MCF 10A (cell line): ENCODE measurements at regions of chr4 and their contacts with region 1.

Region 1: DNA sequence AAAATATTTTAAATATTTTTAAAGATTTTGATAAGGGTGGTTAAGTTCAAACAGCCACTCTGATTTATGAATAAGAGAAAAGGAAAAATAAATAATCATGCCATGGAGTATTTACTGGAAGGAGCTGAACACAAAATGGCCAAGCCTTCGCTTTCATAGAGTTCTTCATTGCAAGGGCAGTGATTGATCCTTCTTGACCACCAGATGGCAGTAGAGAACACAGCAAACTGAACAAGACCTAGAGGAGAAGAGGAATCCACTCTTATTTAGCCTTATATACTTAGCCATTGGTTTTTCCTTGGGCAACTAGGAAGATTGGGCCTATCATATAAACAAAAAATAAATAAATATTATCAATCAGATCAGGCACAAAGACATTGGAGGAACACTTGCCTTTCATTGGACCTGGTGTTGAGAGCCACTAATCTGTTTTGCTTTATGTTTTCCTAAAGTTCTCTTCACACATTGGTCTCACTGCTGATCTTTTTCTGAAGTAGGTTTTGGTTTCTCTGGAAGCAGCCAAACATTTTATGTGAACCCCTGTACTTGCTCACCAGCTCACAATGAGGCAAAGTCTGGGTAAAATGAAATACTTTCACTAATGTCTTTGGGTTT is 58.1 kb upstream of the PARM1 start:
- DNase-seq: peak; percentile 79
- H3K4me3 Mint-ChIP-seq: no peak overlapping the region
- H3K27ac Mint-ChIP-seq: no peak overlapping the region
- H3K4me1 Mint-ChIP-seq: no peaks in the 10 kb centered on the region
- H3K27me3 Mint-ChIP-seq: no peaks in the 10 kb centered on the region
- CTCF ChIP-seq: peak; percentile 73

Region 2: DNA sequence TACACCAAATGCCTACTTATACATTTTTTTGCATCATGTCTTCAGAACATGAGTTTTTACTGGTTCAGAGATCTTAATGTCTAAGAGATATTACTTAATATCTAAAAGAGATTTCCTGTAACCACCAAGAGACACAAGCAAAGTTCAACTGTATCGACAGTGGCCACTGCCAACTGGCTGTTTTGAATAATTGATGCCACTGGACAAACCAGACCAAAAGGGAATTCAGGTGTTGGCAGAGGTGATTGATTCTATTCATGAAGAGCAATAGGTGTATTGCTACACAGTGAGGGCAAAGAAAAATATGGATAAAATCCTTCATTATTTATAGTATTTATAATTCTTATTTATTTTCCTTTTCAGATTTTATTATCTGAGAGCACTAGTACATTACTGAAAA is 1557.8 kb before region 1 on chr4:
- CTCF ChIA-PET with region 1: no interaction called
- POLR2A ChIA-PET with region 1: no interaction called
- intact Hi-C with region 1: no loop called
- DNase-seq: no peak
- H3K4me3 Mint-ChIP-seq: no peak overlapping the region
- H3K27ac Mint-ChIP-seq: no peak overlapping the region
- H3K4me1 Mint-ChIP-seq: no peaks in the 10 kb centered on the region
- H3K27me3 Mint-ChIP-seq: no peaks in the 10 kb centered on the region
- CTCF ChIP-seq: no peak

Region 3: DNA sequence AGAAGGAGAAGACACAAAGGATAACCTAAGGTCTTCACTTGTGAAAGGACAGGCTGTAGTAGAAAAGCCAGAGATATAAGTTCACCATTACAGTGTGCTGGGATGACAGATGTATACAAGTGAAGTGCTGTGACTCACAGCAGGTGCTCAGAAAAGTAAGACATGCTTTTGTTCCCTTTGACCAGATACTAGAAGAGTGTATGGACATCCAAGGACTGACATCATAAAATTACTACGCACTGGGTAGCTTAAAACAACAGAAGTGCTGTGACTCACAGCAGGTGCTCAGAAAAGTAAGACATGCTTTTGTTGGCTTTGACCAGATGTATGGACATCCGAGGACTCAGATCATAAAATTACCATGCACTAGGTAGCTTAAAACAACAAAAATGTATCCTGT is 19.0 kb before region 1 on chr4:
- CTCF ChIA-PET with region 1: interaction called, 10 read pairs
- POLR2A ChIA-PET with region 1: interaction called, 3 read pairs
- intact Hi-C with region 1: no loop called
- DNase-seq: peak; percentile 41
- H3K4me3 Mint-ChIP-seq: no peak overlapping the region
- H3K27ac Mint-ChIP-seq: no peak overlapping the region
- H3K4me1 Mint-ChIP-seq: peaks cover 13% of the 10 kb centered on the region
- H3K27me3 Mint-ChIP-seq: peaks cover 14% of the 10 kb centered on the region
- CTCF ChIP-seq: no peak

Region 4: GRCh38 chr4:74932816-74933561 is 58.1 kb after region 1 on chr4 and contains the start of gene PARM1:
- CTCF ChIA-PET with region 1: interaction called, 41 read pairs
- POLR2A ChIA-PET with region 1: no interaction called
- intact Hi-C with region 1: loop called (anchors 2 kb)
- DNase-seq: peak; percentile 73
- H3K4me3 Mint-ChIP-seq: peak within 1 kb of the TSS; percentile 76
- H3K27ac Mint-ChIP-seq: no peak within 1 kb of the TSS
- H3K4me1 Mint-ChIP-seq: peaks cover 11% of the 10 kb centered on the region
- H3K27me3 Mint-ChIP-seq: peaks cover 13% of the 10 kb centered on the region
- CTCF ChIP-seq: peak; percentile 65
- total RNA-seq, gene PARM1: 0.58 and 1.4 TPM in 2 replicates

Region 5: GRCh38 chr4:75469896-75470295 is 595.0 kb after region 1 on chr4:
- CTCF ChIA-PET with region 1: interaction called, 4 read pairs
- POLR2A ChIA-PET with region 1: no interaction called
- intact Hi-C with region 1: loop called (anchors 10 kb)
- DNase-seq: no peak
- H3K4me3 Mint-ChIP-seq: no peak overlapping the region
- H3K27ac Mint-ChIP-seq: no peak overlapping the region
- H3K4me1 Mint-ChIP-seq: peaks cover 4% of the 10 kb centered on the region
- H3K27me3 Mint-ChIP-seq: no peaks in the 10 kb centered on the region
- CTCF ChIP-seq: no peak

Region 6: DNA sequence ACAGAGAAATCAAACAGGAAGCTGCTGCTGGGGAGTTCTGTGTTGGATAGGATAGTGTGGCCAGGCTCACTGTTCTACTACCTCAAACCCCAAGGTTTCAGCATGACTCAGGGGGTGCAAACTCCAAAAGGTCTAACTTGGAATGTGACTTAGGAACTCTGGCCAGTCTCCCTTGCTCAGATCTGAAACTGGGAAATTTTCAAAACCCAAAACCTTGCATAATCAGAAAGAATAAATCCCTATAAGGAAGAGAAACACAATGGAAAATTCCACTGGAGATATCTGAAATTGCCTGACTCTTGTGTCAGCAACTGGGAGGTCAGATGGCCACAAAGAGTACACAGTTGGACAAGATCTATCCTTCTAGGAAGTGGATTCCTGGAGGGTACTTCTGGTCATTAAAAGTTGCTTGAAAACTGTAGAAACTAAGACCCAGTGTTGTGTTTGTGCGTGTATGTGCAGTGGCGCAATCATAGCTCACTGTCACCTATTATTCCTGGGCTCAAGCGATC is 969.3 kb after region 1 on chr4:
- CTCF ChIA-PET with region 1: no interaction called
- POLR2A ChIA-PET with region 1: no interaction called
- intact Hi-C with region 1: loop called (anchors 10 kb)
- DNase-seq: peak; percentile 66
- H3K4me3 Mint-ChIP-seq: no peak overlapping the region
- H3K27ac Mint-ChIP-seq: no peak overlapping the region
- H3K4me1 Mint-ChIP-seq: peaks cover 5% of the 10 kb centered on the region
- H3K27me3 Mint-ChIP-seq: no peaks in the 10 kb centered on the region
- CTCF ChIP-seq: no peak